Endothelial cell of umbilical vein (primary cell): ENCODE measurements at regions of chr7 and their contacts with region 1.

Region 1: GRCh38 chr7:151143261-151144015 is 24.1 kb downstream of the GBX1 start:
- DNase-seq: no peak
- H3K4me3 ChIP-seq: no peak overlapping the region
- H3K27ac ChIP-seq: no peak overlapping the region
- H3K4me1 ChIP-seq: no peaks in the 10 kb centered on the region
- H3K27me3 ChIP-seq: no peaks in the 10 kb centered on the region
- CTCF ChIP-seq: no peak
- POLR2A ChIP-seq: no peak

Region 2: GRCh38 chr7:150830937-150831336 is 312.5 kb before region 1 on chr7:
- CTCF ChIA-PET with region 1: no interaction called
- POLR2A ChIA-PET with region 1: interaction called, 11 read pairs
- dilution Hi-C with region 1: no loop called
- intact Hi-C with region 1: no loop called
- DNase-seq: no peak
- H3K4me3 ChIP-seq: no peak overlapping the region
- H3K27ac ChIP-seq: no peak overlapping the region
- H3K4me1 ChIP-seq: no peaks in the 10 kb centered on the region
- H3K27me3 ChIP-seq: peaks cover 4 to 14% of the 10 kb centered on the region in 2 experiments
- CTCF ChIP-seq: no peak
- POLR2A ChIP-seq: no peak

Region 3: DNA sequence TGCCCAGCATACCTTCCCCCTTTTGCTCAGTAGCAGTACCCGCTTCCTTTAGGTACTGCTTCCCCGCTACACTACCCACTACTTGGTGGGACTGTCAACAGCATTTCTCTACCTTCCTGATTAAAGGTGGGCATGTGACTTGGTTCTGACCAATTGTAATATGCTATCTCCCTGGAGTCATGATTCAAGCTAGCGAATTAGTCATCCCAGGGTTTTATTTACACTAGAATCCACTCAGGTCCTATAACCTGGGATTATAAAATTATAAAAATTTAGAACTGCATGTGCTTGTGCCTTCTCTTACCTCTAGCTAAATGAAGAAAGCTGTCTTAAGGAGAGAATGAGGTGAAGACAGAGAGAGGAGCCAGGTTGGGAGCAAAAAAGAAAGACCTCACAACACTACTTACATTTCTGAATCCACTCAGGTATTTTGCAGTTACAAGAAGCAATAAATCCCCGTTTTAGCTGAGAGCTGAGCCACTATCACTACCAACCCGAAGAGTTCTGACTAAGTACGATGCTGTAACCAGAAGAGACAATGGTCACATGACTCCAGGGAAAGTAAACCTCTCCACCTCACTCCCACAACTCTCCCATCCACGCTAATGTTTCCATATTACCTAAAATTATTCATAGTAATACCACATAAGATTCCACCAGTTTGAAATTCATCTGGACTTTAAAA is 14.3 kb after region 1 on chr7:
- CTCF ChIA-PET with region 1: interaction called, 10 read pairs
- POLR2A ChIA-PET with region 1: no interaction called
- dilution Hi-C with region 1: no loop called
- intact Hi-C with region 1: no loop called
- DNase-seq: peak; percentile 71
- H3K4me3 ChIP-seq: no peak overlapping the region
- H3K27ac ChIP-seq: no peak overlapping the region
- H3K4me1 ChIP-seq: peaks cover 4% of the 10 kb centered on the region
- H3K27me3 ChIP-seq: peaks cover 13 to 33% of the 10 kb centered on the region in 2 experiments
- CTCF ChIP-seq: no peak
- POLR2A ChIP-seq: no peak